ENCODE measurements at regions of chr4 and their contacts with region 1.

Region 1: GRCh38 chr4:26459054-26459755 is 31.1 kb downstream of the CCKAR start:
- DNase-seq: no peak
- ATAC-seq: peak; percentile 53 to 77 (median 56)
- H3K4me3 ChIP-seq: no peak overlapping the region
- H3K27ac ChIP-seq: no peak overlapping the region
- H3K4me1 ChIP-seq: no peaks in the 10 kb centered on the region
- H3K27me3 ChIP-seq: no peaks in the 10 kb centered on the region
- CTCF ChIP-seq: peak; percentile 54

Region 2: DNA sequence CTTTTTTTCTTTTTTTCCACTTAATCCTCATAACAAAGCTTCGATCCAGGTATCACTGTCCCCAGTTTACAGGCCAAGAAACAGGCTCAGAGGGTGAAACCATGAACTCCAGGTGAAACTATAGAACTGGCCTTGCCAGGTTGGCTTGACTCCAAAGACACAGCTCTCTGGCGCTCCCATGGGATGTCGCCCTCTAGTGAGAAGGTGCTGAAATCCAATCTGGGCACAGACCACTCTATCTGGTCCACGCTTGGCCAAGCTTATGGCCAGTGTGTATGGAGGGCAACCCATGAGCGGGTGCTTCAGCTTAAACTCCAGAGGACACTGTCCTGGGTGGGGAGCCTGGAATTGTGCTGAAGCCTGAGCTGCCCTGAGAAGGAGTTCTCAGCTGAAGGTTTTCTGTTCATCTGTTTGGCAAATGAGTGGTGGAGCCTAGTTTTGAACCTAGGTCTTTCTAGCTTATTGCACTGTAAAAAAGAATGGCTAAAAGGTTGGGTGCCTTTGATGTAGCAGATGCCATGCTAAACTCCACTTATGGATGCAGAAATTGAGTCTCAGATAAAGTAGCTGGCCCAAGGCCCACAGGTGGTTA is 666.9 kb before region 1 on chr4:
- intact Hi-C with region 1: no loop called
- DNase-seq: no peak
- ATAC-seq: no peak
- H3K4me3 ChIP-seq: no peak overlapping the region
- H3K27ac ChIP-seq: no peak overlapping the region
- H3K4me1 ChIP-seq: no peaks in the 10 kb centered on the region
- H3K27me3 ChIP-seq: peaks cover 0 to 2% (median 0%) of the 10 kb centered on the region in 3 donors
- CTCF ChIP-seq: no peak

Region 3: DNA sequence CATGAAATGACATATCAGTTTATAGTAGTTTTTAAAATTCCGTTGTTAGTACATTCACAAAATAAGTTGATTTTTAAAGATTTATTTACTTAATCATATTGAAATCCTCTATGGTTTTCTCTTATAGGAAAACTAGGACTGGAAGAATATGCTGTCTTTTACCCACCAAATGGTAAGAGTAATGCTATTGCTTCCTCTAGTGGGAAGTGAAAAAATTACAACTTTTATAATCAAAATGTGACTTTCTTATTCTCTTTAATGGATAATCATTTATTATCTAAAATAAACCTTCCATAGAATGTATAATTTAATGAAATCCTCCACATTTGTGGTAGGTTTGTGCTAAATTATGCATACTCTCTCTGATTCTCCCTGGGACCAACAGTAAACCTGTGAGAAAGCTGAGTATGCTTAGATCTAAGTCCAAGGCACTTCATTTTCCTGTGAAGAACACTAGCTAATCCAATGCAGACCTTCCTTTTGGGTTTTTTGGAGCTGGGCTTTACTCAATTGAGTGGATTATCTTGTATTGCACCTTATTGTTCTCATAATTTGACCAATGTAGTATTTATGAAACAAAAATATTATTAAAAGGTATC is 260.8 kb after region 1 on chr4:
- intact Hi-C with region 1: loop called (anchors 2 to 10 kb)
- DNase-seq: no peak
- ATAC-seq: no peak
- H3K4me3 ChIP-seq: no peak overlapping the region
- H3K27ac ChIP-seq: no peak overlapping the region
- H3K4me1 ChIP-seq: peaks cover 10% of the 10 kb centered on the region
- H3K27me3 ChIP-seq: no peaks in the 10 kb centered on the region
- CTCF ChIP-seq: peak; percentile 65

Region 4: DNA sequence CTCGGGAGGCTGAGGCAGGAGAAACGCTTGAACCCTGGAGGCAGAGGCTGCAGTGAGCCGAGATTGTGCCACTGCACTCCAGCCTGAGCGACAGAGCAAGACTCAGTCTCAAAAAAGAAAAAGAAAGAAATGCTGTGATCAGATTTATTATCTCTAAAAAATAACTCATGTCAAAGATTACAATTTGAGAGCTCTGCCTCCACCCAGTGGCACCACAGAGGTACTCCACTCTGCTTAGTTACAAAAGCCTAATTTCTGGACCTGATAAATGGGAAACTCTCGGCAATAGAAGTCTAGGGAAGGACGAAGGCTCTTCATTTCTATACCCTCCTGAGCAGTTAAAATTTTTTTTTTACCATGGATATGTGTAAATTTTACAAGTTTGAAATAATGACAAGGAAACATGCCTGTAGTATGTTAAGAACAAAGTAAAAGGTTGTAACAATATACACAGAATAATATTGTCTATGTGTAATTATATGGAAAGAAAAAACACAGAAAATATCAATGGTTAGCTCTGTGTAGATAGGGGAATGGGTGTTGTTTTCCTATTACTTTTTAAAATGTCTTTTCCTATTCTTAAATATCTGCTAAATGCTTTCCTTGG is 551.2 kb after region 1 on chr4:
- intact Hi-C with region 1: loop called (anchors 2 to 5 kb)
- DNase-seq: peak; percentile 42 to 66
- ATAC-seq: peak; percentile 71 to 90 (median 77)
- H3K4me3 ChIP-seq: no peak overlapping the region
- H3K27ac ChIP-seq: no peak overlapping the region
- H3K4me1 ChIP-seq: peaks cover 3% of the 10 kb centered on the region
- H3K27me3 ChIP-seq: no peaks in the 10 kb centered on the region
- CTCF ChIP-seq: peak; percentile 94